HEK293 (cell line): ENCODE measurements at regions of chr7 and their contacts with region 1.

Region 1: GRCh38 chr7:16564909-16565426 is 38.3 kb downstream of the LRRC72 start:
- H3K4me3 ChIP-seq: no peak overlapping the region
- H3K27ac ChIP-seq: no peak overlapping the region
- H3K4me1 ChIP-seq: no peaks in the 10 kb centered on the region
- CTCF ChIP-seq: no peak

Region 2: DNA sequence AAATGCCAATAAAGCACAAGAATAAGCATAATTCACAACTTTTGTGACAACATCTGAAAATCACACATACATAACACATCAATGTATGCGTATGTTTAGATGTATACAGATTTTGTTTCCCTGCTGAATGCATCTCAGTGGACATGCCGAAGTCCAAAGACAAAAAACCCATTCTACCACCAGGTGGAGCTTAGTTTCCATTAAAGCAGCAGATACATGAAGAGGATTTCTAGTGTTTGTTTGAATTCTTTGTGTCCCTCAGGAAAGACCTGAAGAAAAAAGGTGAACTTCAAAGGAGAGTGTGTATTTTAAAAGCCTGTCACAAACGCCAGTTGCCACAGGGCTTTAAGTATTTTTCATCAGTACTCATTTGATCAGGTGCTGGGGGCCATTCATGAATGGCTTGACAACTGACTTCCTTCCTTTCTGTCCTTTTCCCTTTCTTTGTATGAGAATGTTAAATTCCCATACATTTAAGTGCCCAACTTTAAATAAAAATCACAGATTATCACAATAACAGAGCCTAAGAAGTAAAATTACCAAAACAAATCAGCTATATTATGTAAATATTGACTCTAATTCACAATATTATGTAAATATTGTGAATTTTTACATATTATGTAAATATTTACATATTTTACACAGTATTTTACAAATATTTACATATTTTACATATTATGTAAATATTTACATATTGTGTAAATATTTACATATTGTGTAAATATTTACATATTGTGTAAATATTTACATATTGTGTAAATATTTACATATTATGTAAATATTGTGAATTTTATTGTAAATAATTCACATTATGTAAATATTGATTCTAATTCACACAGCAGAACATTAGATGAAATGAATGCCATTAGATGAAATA is 486.7 kb before region 1 on chr7:
- CTCF ChIA-PET with region 1: interaction called, 34 read pairs
- POLR2A ChIA-PET with region 1: no interaction called
- H3K4me3 ChIP-seq: no peak overlapping the region
- H3K27ac ChIP-seq: no peak overlapping the region
- H3K4me1 ChIP-seq: no peaks in the 10 kb centered on the region
- CTCF ChIP-seq: peak; percentile 25; the same call in 1 of the 2 replicates

Region 3: DNA sequence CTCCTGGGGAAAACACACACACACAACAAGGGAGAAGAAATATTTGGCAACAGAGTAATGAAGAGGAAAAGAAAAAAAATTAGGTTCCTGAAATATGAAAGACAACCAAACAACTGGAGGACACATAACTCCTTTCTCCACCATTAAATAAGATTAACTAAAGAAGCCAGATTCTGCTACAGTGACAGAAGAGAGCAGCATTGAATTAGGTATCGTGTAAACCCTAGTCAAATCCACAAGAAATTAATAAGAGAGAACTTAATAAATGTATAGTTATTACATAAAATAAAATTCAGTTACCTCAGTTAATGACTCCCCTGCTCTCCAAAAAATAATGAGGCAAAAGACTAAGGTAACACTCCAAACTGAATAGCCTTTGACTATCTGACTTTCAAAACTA is 450.3 kb before region 1 on chr7:
- CTCF ChIA-PET with region 1: interaction called, 14 read pairs
- POLR2A ChIA-PET with region 1: no interaction called
- H3K4me3 ChIP-seq: no peak overlapping the region
- H3K27ac ChIP-seq: no peak overlapping the region
- H3K4me1 ChIP-seq: no peaks in the 10 kb centered on the region
- CTCF ChIP-seq: no peak

Region 4: GRCh38 chr7:16431646-16432424 is 133.1 kb before region 1 on chr7:
- CTCF ChIA-PET with region 1: interaction called, 71 read pairs
- POLR2A ChIA-PET with region 1: no interaction called
- H3K4me3 ChIP-seq: no peak overlapping the region
- H3K27ac ChIP-seq: no peak overlapping the region
- H3K4me1 ChIP-seq: no peaks in the 10 kb centered on the region
- CTCF ChIP-seq: peak; percentile 26; the same call in 1 of the 2 replicates

Region 5: GRCh38 chr7:16465469-16466361 is 99.3 kb before region 1 on chr7 and contains the start of gene SOSTDC1:
- CTCF ChIA-PET with region 1: interaction called, 10 read pairs
- POLR2A ChIA-PET with region 1: no interaction called
- H3K4me3 ChIP-seq: peak within 1 kb of the TSS; percentile 35
- H3K27ac ChIP-seq: peak within 1 kb of the TSS; percentile 32; the same call in 1 of the 2 replicates
- H3K4me1 ChIP-seq: no peaks in the 10 kb centered on the region
- CTCF ChIP-seq: no peak

Region 6: DNA sequence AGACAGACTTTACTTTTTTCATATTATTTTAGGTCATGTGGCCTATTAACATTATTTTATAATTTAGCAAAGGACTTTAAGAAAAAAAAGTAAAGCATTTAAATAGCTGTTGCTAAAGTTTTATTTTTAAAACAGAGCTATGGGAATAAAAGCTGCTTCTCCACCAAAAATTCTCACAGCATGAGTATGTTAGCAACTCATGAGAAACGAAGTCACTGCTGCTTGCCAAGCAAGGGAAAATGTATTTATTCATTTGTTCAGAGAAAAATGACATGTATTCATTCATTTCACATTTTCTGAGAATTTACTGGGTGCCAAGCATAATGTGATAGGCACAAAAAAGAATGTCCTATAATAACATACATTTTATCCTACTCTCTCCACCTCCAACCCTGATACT is 33.3 kb before region 1 on chr7:
- CTCF ChIA-PET with region 1: interaction called, 10 read pairs
- POLR2A ChIA-PET with region 1: no interaction called
- H3K4me3 ChIP-seq: no peak overlapping the region
- H3K27ac ChIP-seq: no peak overlapping the region
- H3K4me1 ChIP-seq: no peaks in the 10 kb centered on the region
- CTCF ChIP-seq: no peak

Region 7: DNA sequence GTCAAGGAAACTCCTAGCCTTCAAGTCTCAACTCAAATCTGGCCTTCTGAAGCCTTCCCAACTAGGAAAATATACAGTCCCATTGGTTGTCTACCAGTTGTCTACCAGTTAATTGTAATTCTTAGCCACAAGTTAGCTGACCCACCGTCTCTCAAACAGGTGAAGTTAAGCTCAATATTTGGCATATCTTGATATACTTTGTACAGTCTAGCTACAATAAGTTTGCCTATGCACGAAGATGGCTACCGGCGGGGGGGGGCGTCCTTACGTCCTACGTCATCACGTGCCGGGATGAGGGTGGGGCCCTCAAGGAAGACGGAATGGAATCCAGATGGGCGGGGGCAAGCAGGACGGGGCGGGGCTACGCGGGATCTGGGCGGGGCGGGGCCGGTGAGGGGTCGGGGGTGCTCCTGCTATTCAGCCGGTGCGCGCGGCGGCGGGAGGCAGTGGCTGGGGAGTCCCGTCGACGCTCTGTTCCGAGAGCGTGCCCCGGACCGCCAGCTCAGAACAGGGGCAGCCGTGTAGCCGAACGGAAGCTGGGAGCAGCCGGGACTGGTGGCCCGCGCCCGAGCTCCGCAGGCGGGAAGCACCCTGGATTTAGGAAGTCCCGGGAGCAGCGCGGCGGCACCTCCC is 733.4 kb after region 1 on chr7 and contains the start of gene AHR:
- CTCF ChIA-PET with region 1: no interaction called
- POLR2A ChIA-PET with region 1: no interaction called
- H3K4me3 ChIP-seq: peak within 1 kb of the TSS; percentile 99
- H3K27ac ChIP-seq: peak within 1 kb of the TSS; percentile 87
- H3K4me1 ChIP-seq: peaks cover 13% of the 10 kb centered on the region
- CTCF ChIP-seq: no peak